Activated T-helper 2 cell treated with anti-CD3 and anti-CD28 coated beads, Interferon-gamma antibody, Interleukin-2, Interleukin-4, amounts not matched to agents 10 μg/mL and 5 μg/mL and 100 μg/mL, durations not matched to agents 14 hours and 24 hours and 36 hours (primary cell): ENCODE measurements at regions of chr10 and their contacts with region 1.

Region 1: DNA sequence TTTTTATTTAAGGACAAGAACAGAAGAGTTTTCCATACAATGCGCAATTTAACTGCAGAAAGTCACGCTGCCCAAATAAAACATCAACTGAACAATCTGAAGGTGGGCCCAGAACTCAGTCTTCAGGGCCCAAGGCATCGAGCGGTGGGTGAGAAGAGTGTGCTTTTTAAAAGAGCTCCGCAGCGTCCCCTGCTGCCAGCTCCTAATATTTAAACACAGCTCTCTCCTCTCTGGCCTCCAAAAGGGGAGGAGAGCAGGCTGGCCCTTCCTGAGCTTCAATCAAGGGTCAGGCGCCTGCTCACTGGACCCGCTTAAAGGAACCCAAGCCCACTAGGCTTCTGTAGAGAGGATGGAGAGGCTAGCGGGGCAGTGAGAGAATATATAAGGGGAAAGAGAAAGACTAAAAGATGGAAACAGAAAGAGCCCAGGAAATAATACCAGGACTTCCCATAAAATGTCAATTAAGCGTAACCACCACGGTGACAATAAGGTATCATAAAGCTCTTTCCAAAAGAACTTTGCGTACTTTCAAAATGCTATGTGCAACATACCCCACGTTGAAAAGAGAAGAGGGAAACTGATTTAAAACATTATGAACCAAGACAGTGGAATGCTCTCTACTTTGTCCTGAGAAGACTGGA is 2.8 kb downstream of the FAM53B start:
- DNase-seq: peak; percentile 58
- H3K4me3 Mint-ChIP-seq: peak overlapping the region; percentile 80
- H3K27ac Mint-ChIP-seq: peak overlapping the region; percentile 67
- H3K4me1 Mint-ChIP-seq: peaks cover 49% of the 10 kb centered on the region
- H3K27me3 Mint-ChIP-seq: peaks cover 6% of the 10 kb centered on the region

Region 2: GRCh38 chr10:124539935-124540641 is 201.3 kb before region 1 on chr10:
- intact Hi-C with region 1: loop called (anchors 1 kb)
- DNase-seq: peak; percentile 36
- H3K4me3 Mint-ChIP-seq: no peak overlapping the region
- H3K27ac Mint-ChIP-seq: no peak overlapping the region
- H3K4me1 Mint-ChIP-seq: no peaks in the 10 kb centered on the region
- H3K27me3 Mint-ChIP-seq: no peaks in the 10 kb centered on the region

Region 3: GRCh38 chr10:124647421-124648130 is 93.8 kb before region 1 on chr10:
- intact Hi-C with region 1: loop called (anchors 2 kb)
- DNase-seq: peak; percentile 70
- H3K4me3 Mint-ChIP-seq: peak overlapping the region; percentile 54
- H3K27ac Mint-ChIP-seq: peak overlapping the region; percentile 84
- H3K4me1 Mint-ChIP-seq: peaks cover 58% of the 10 kb centered on the region
- H3K27me3 Mint-ChIP-seq: no peaks in the 10 kb centered on the region

Region 4: GRCh38 chr10:124719213-124719851 is 22.1 kb before region 1 on chr10:
- intact Hi-C with region 1: loop called (anchors 1 kb)
- DNase-seq: peak; percentile 47
- H3K4me3 Mint-ChIP-seq: peak overlapping the region; percentile 47
- H3K27ac Mint-ChIP-seq: peak overlapping the region; percentile 58
- H3K4me1 Mint-ChIP-seq: peaks cover 76% of the 10 kb centered on the region
- H3K27me3 Mint-ChIP-seq: peaks cover 2% of the 10 kb centered on the region

Region 5: DNA sequence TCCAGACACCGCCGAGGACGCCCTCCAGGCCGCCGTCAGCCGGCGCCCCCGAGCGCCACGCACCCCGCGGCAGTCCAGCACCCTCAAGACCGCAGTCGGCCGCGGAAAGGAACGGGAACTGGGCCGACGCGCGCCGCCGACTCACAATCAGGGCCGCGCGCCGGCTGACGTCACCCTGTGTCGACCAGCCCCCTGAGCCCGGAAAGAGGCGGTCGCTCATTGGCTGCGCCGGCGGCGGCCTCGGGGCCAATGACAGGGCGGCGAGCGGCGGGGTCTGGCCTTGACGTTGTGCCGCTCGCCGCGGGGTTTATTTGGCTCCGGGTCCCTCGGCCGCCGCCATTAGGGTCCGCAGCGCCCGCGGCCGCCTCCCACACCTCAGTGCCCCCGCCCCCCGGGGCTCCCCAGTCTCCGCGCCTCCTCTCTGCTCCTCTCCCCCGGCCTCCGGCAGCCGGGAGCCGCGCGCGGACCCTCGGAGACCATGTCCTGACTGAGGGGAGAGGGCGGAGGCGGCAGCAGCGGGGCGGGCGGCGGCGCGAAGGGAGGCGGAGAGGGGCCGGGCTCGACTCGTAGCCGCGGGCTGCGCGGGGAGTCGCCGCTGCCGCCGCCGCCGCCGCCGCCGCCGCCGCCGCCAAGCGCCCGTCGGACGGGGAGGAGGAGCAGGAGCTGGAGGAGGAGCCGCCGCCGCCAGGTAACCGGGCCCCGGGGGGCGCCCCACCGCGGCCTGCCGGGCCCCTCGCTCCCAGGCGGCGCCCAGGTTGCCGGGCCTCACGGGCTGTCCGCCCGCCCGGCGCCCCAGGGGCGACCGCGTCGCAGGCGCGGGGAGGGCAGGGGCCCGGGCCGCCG is 175.4 kb after region 1 on chr10:
- intact Hi-C with region 1: loop called (anchors 10 kb)
- DNase-seq: peak; percentile 94
- H3K4me3 Mint-ChIP-seq: peak overlapping the region; percentile 84
- H3K27ac Mint-ChIP-seq: peak overlapping the region; percentile 85
- H3K4me1 Mint-ChIP-seq: peaks cover 37% of the 10 kb centered on the region
- H3K27me3 Mint-ChIP-seq: peaks cover 7% of the 10 kb centered on the region

Region 6: DNA sequence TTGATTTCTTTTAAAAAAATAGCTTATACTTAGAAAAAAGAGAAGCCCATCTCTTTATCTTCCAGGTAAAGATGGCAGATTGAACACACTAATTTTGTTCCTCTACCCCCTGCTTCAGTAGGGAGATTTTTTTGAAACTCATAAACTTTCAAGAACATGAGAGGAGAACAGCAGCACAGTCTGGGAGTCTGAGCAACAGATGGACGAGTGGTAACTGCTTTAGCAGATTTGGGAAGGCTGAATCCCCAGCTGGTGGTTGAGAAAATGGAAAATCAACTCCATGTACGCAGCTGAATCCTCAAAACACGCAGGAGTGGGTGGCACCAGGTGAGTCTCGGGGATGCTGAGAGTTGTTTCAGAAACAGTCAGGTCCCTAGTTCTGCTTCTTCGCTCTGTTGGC is 533.6 kb after region 1 on chr10:
- intact Hi-C with region 1: no loop called
- DNase-seq: no peak
- H3K4me3 Mint-ChIP-seq: no peak overlapping the region
- H3K27ac Mint-ChIP-seq: no peak overlapping the region
- H3K4me1 Mint-ChIP-seq: no peaks in the 10 kb centered on the region
- H3K27me3 Mint-ChIP-seq: no peaks in the 10 kb centered on the region